ENCODE measurements at regions of chr17 and their contacts with region 1.

Region 1: GRCh38 chr17:64938925-64939474 is 19.7 kb upstream of the LRRC37A3 start:
- DNase-seq: peak; percentile 80
- ATAC-seq: peak; percentile 94
- H3K4me3 Mint-ChIP-seq: no peak overlapping the region
- H3K27ac Mint-ChIP-seq: no peak overlapping the region
- H3K4me1 Mint-ChIP-seq: peaks cover 2% of the 10 kb centered on the region; the same call in 1 of the 2 replicates
- H3K27me3 Mint-ChIP-seq: no peaks in the 10 kb centered on the region
- CTCF ChIP-seq: peak; percentile 52

Region 2: GRCh38 chr17:64920026-64920418 is 19.0 kb before region 1 on chr17:
- CTCF ChIA-PET with region 1: interaction called, 20 read pairs
- POLR2A ChIA-PET with region 1: no interaction called
- DNase-seq: no peak
- ATAC-seq: peak; percentile 1; the same call in 1 of the 2 replicates
- H3K4me3 Mint-ChIP-seq: peak overlapping the region; percentile 71
- H3K27ac Mint-ChIP-seq: no peak overlapping the region
- H3K4me1 Mint-ChIP-seq: peaks cover 4% of the 10 kb centered on the region
- H3K27me3 Mint-ChIP-seq: no peaks in the 10 kb centered on the region
- CTCF ChIP-seq: no peak

Measured in WTC11 (cell line).